ENCODE measurements at regions of chr2 and their contacts with region 1.

Region 1: DNA sequence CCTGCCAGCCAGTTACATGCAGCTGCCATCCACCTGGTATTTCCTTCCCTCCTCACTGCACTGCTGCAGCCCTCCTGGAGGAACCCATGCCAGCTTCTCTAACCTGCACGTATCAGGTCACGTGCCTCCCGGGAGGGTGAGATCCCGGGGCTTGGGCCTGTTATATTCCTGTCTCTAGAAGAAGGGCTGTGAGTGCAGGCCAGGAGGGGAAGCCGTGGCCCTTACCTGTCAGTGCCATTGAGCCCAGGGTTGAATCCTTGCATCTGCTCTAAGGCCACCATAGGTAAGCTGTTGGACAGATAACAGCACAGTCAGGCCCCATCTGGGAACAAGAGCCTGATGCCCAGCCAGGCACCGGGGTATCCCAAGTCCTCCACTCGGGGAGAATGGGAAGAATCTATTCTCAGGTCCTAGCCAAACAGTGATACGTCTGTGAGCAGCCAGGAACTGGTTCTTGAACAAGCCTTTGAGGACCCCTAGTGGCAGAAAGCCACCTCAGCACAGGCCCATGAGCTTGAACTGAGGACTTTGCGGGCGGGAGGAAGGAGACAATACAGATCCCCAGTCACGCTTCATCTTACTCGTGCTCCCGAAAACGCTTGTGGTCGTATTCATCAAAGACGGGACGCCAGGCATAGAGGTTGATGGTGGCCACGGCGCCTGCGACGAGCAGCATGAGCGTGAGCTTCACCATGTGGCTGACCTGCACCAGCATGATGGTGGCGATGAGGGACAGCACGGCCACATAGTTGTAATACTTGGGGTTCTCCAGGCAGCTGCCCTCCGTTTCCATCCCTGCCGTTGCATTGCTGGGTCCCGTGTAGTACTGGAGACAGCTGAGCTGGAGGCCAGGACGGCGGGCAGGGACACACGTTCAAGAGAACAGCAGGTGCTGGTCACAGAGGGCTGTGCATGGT is 34.4 kb downstream of the CENPO start:
- DNase-seq: peak; percentile 89
- ATAC-seq: peak; percentile 88
- H3K4me3 ChIP-seq: no peak overlapping the region
- H3K27ac ChIP-seq: peak overlapping the region; percentile 88
- H3K4me1 ChIP-seq: peaks cover 22% of the 10 kb centered on the region
- H3K27me3 ChIP-seq: no peaks in the 10 kb centered on the region
- CTCF ChIP-seq: peak; percentile 95

Region 2: GRCh38 chr2:24409700-24410556 is 417.7 kb before region 1 on chr2:
- CTCF ChIA-PET with region 1: interaction called, 7 read pairs
- POLR2A ChIA-PET with region 1: no interaction called
- intact Hi-C with region 1: loop called (anchors 1 kb)
- DNase-seq: peak; percentile 82
- ATAC-seq: peak; percentile 96
- H3K4me3 ChIP-seq: no peak overlapping the region
- H3K27ac ChIP-seq: no peak overlapping the region
- H3K4me1 ChIP-seq: no peaks in the 10 kb centered on the region
- H3K27me3 ChIP-seq: no peaks in the 10 kb centered on the region
- CTCF ChIP-seq: peak; percentile 94

Region 3: GRCh38 chr2:24490674-24491625 is 336.6 kb before region 1 on chr2 and contains the start of gene NCOA1:
- CTCF ChIA-PET with region 1: interaction called, 5 read pairs
- POLR2A ChIA-PET with region 1: no interaction called
- intact Hi-C with region 1: loop called (anchors 2 kb)
- DNase-seq: peak; percentile 82
- ATAC-seq: peak; percentile 84
- H3K4me3 ChIP-seq: peak within 1 kb of the TSS; percentile 88
- H3K27ac ChIP-seq: peak within 1 kb of the TSS; percentile 4; the same call in 1 of the 2 replicates
- H3K4me1 ChIP-seq: peaks cover 29% of the 10 kb centered on the region
- H3K27me3 ChIP-seq: no peaks in the 10 kb centered on the region
- CTCF ChIP-seq: no peak
- total RNA-seq, gene NCOA1: 7.5 and 8.2 TPM in 2 replicates

Region 4: DNA sequence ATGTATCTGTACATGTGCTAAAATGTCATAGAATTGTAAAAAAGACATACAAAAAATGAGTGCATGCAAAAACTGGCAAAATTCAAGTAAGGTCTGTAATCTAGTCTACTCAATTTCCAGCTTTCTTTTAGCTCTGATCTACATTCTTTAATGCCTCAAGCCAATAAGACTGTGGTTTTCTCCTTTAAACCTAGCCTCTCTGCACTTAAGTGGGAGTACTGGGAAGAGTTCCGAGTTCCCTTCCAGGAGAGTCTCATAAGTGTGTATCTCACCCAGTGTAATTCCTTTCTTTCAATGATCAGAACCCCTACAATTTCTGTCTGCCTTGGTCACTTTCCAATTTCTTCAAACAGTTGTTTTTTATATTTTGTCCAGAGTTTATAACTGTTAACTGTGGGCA is 184.5 kb before region 1 on chr2:
- CTCF ChIA-PET with region 1: no interaction called
- POLR2A ChIA-PET with region 1: no interaction called
- intact Hi-C with region 1: no loop called
- DNase-seq: no peak
- ATAC-seq: no peak
- H3K4me3 ChIP-seq: no peak overlapping the region
- H3K27ac ChIP-seq: no peak overlapping the region
- H3K4me1 ChIP-seq: no peaks in the 10 kb centered on the region
- H3K27me3 ChIP-seq: no peaks in the 10 kb centered on the region
- CTCF ChIP-seq: no peak

Region 5: DNA sequence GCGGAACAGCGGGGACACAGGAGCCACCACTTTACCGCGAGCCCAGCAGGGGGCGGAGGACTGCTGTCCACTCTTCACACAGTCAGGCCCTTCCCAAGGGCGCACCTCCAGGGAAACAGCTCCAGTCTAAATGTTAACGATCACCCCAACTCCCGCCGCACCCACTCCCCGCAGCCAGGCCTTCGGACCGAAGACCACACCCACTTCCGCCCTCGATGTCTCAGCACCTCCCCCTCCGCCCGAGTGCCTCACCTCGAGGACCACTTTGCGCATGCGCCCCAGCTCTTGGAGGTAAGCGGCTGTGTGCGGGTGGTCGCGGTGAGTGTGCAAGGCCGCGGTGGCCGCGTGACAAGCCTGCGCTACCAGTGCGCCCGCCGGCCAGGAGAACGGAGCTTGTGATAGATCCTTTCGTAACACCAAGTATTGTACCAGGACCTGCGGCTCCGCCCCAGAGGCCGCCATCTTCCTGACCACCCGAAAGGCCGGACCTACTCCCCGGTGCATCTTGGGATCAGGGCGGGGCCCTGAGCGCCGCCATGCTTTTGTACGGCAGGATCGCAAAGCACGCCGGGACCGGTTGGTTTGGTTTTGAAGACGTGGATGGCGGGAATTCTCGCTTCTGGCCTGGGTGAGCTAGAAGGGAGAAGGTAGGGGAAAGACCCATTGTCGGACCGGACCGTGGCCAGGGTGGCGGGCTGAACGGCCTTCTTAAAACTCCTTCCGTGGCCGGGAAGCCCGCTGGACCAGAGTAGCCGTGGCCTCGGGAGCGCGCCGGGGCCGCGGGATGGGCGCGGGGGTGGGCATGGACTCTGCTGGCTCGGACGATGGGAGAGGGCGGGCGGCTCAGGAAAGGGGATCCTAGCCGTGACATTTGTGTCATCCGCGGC is 34.5 kb before region 1 on chr2 and contains the starts of genes CENPO and PTRHD1:
- CTCF ChIA-PET with region 1: interaction called, 23 read pairs
- POLR2A ChIA-PET with region 1: interaction called, 4 read pairs
- intact Hi-C with region 1: loop called (anchors 1 kb)
- DNase-seq: peak; percentile 96
- ATAC-seq: peak; percentile 86
- H3K4me3 ChIP-seq: peak within 1 kb of the TSS; percentile 76
- H3K27ac ChIP-seq: peak within 1 kb of the TSS; percentile 86
- H3K4me1 ChIP-seq: peaks cover 23% of the 10 kb centered on the region
- H3K27me3 ChIP-seq: no peaks in the 10 kb centered on the region
- CTCF ChIP-seq: peak; percentile 72
- total RNA-seq, gene CENPO: 41.4 and 68.5 TPM in 2 replicates
- total RNA-seq, gene PTRHD1: 35.8 and 68.6 TPM in 2 replicates

Region 6: DNA sequence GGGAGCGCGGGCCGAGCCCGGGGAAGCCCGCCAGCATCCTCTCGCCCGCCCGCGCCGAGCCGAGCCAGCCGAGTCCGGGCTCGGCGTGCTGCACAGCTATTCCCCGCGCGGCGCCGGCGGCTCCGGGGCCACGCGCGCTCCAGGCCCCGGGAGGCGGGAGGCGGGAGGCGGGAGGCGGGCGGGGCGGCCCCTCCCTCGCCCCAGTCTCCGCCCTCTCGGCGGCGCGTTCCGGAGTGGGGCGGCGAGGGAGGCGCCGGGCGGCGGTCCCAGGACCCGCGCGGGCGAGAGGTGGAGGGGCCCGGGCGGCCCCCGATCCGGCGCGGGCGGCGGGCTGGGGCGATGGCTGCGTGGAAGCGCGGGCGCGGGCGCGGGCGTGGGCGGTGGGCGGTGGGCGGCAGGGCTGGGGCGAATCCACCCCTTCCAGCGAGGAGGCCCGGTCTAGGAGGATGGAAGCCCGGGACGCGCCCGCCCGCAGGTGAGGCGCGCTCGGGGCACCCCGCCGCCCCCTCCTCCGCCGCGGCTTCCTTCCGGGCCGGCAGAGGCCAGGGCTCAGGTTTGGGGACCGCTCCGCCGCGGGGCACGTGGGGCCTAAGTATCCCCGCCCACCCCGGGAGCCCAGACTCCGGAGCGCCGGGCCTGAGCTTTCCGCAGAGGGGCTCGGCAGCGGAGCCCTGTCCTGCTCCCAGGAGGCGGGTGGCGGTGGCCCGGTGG is 92.7 kb after region 1 on chr2 and contains the start of gene ADCY3:
- CTCF ChIA-PET with region 1: no interaction called
- POLR2A ChIA-PET with region 1: no interaction called
- intact Hi-C with region 1: loop called (anchors 1 kb)
- DNase-seq: peak; percentile 46
- ATAC-seq: peak; percentile 64
- H3K4me3 ChIP-seq: peak within 1 kb of the TSS; percentile 79
- H3K27ac ChIP-seq: no peak within 1 kb of the TSS
- H3K4me1 ChIP-seq: peaks cover 20% of the 10 kb centered on the region
- H3K27me3 ChIP-seq: no peaks in the 10 kb centered on the region
- CTCF ChIP-seq: no peak
- total RNA-seq, gene ADCY3: 52.0 and 70.3 TPM in 2 replicates

Region 7: GRCh38 chr2:24971536-24972314 is 144.1 kb after region 1 on chr2 and contains the start of gene DNAJC27:
- CTCF ChIA-PET with region 1: interaction called, 3 read pairs
- POLR2A ChIA-PET with region 1: no interaction called
- intact Hi-C with region 1: loop called (anchors 5 kb)
- DNase-seq: peak; percentile 98
- ATAC-seq: peak; percentile 92
- H3K4me3 ChIP-seq: peak within 1 kb of the TSS; percentile 97
- H3K27ac ChIP-seq: peak within 1 kb of the TSS; percentile 82
- H3K4me1 ChIP-seq: peaks cover 14% of the 10 kb centered on the region
- H3K27me3 ChIP-seq: no peaks in the 10 kb centered on the region
- CTCF ChIP-seq: no peak
- total RNA-seq, gene DNAJC27: 2.0 and 3.1 TPM in 2 replicates

Region 8: DNA sequence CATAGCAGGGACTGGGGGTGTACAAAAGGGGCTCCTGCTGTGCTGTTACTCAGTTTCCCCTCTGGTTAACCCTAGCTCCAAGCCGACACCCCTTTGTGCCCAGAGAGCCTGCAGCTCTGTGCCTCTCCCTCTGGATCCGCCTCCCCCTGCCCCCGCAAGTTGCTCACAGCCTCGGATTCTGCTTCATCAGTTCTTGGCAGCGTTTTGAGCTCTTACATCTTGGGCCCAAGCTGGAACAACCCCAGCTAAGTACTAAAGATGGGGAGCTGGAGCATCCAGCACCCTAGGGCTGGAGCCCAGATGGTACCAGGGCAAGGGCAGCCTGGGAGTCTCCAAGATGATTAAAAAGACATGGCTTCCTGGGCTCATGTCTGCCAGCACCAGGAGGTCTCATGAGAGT is 300.1 kb after region 1 on chr2:
- CTCF ChIA-PET with region 1: interaction called, 14 read pairs
- POLR2A ChIA-PET with region 1: interaction called, 7 read pairs
- intact Hi-C with region 1: no loop called
- DNase-seq: no peak
- ATAC-seq: no peak
- H3K4me3 ChIP-seq: no peak overlapping the region
- H3K27ac ChIP-seq: no peak overlapping the region
- H3K4me1 ChIP-seq: peaks cover 2% of the 10 kb centered on the region; the same call in 1 of the 2 replicates
- H3K27me3 ChIP-seq: no peaks in the 10 kb centered on the region
- CTCF ChIP-seq: no peak